GM12878 (cell line): ENCODE measurements at regions of chr2 and their contacts with region 1.

Region 1: GRCh38 chr2:233053928-233054784 is 6.0 kb upstream of the INPP5D start:
- DNase-seq: no peak
- ATAC-seq: peak; percentile 98
- H3K4me3 ChIP-seq: no peak overlapping the region
- H3K27ac ChIP-seq: no peak overlapping the region
- H3K4me1 ChIP-seq: peaks cover 2% of the 10 kb centered on the region
- H3K27me3 ChIP-seq: no peaks in the 10 kb centered on the region
- CTCF ChIP-seq: peak; percentile 87 to 97 (median 93)
- EP300 ChIP-seq: no peak
- POLR2A ChIP-seq: no peak
- RAD21 ChIP-seq: peak; percentile 74

Region 2: DNA sequence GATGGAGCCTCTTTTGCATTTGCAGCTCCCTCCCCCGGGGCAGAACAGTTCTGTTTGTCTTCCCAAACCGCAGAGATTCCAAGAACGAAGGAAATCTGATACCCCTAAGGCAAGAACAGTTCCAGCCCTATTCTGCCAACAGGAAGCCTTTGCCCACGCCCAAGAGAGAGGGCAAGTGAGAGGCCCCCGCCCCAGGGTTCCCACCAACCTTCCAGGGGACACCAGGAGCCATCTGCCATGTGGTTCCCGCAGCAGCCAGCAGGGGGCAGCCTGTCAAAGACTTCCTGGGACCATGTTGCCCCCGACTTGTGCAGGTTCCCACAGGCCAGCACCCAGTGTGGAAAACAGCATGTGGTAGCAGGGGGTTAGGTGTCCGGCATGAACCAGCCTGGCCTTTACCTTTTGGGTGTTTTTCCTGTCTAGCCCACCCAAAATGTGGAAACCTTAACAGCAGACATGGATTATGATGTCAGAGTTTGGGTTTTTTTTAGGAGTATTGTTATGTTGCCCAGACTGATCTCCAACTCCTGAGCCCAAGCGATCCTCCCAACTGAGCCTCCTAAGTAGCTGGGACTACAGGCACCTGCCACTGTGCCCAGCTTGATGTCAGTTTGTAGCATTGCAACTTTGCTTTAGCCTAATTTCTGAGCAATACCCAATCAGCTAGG is 442.5 kb before region 1 on chr2:
- CTCF ChIA-PET with region 1: interaction called, 5 read pairs
- POLR2A ChIA-PET with region 1: no interaction called
- RAD21 ChIA-PET with region 1: no interaction called
- SMC1A ChIA-PET with region 1: interaction called, 3 read pairs
- in situ Hi-C with region 1: no loop called
- intact Hi-C with region 1: loop called (anchors 1 kb)
- DNase-seq: no peak
- ATAC-seq: peak; percentile 90
- H3K4me3 ChIP-seq: no peak overlapping the region
- H3K27ac ChIP-seq: no peak overlapping the region
- H3K4me1 ChIP-seq: no peaks in the 10 kb centered on the region
- H3K27me3 ChIP-seq: no peaks in the 10 kb centered on the region
- CTCF ChIP-seq: peak; percentile 69 to 94 (median 92)
- EP300 ChIP-seq: no peak
- POLR2A ChIP-seq: no peak
- RAD21 ChIP-seq: peak; percentile 49

Region 3: GRCh38 chr2:232854082-232854481 is 200.1 kb before region 1 on chr2:
- CTCF ChIA-PET with region 1: interaction called, 37 read pairs
- POLR2A ChIA-PET with region 1: interaction called, 3 read pairs
- RAD21 ChIA-PET with region 1: interaction called, 4 read pairs
- SMC1A ChIA-PET with region 1: interaction called, 19 read pairs
- in situ Hi-C with region 1: no loop called
- intact Hi-C with region 1: loop called (anchors 1 kb)
- DNase-seq: no peak
- ATAC-seq: no peak
- H3K4me3 ChIP-seq: no peak overlapping the region
- H3K27ac ChIP-seq: no peak overlapping the region
- H3K4me1 ChIP-seq: no peaks in the 10 kb centered on the region
- H3K27me3 ChIP-seq: no peaks in the 10 kb centered on the region
- CTCF ChIP-seq: no peak
- EP300 ChIP-seq: no peak
- POLR2A ChIP-seq: no peak
- RAD21 ChIP-seq: no peak

Region 4: DNA sequence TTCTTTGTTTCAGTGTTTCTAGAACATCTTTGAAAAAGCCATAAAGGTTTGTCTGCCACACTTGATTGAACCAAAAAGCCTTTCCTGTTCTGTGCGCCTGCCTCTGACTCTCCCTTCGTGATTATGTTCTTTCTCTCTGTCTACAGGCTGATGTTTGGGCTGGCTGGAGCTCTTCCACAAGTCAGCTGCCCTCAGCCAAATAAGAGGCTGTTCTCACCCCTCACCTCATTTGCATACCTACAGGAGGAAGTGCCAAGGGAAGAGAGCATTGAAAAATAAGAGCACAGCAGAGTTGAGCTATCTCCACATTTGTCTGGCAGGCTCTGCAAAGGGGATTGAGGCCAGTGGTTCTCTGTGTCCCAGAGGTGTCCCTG is 21.8 kb after region 1 on chr2:
- CTCF ChIA-PET with region 1: interaction called, 68 read pairs
- POLR2A ChIA-PET with region 1: interaction called, 271 read pairs
- RAD21 ChIA-PET with region 1: interaction called, 361 read pairs
- SMC1A ChIA-PET with region 1: interaction called, 351 read pairs
- in situ Hi-C with region 1: no loop called
- intact Hi-C with region 1: no loop called
- DNase-seq: peak; percentile 82
- ATAC-seq: peak; percentile 68
- H3K4me3 ChIP-seq: peak overlapping the region; percentile 30; the same call in 1 of the 2 replicates
- H3K27ac ChIP-seq: peak overlapping the region; percentile 89
- H3K4me1 ChIP-seq: peaks cover 87% of the 10 kb centered on the region
- H3K27me3 ChIP-seq: no peaks in the 10 kb centered on the region
- CTCF ChIP-seq: no peak
- EP300 ChIP-seq: 0 out of 4 replicates have a peak, but pooled peaks of 1 of the 2 experiments have one; percentile 33
- POLR2A ChIP-seq: 0 out of 2 replicates have a peak, but pooled peaks have one; percentile 17
- RAD21 ChIP-seq: no peak

Region 5: GRCh38 chr2:233108611-233109490 is 54.7 kb after region 1 on chr2:
- CTCF ChIA-PET with region 1: interaction called, 10 read pairs
- POLR2A ChIA-PET with region 1: interaction called, 70 read pairs
- RAD21 ChIA-PET with region 1: interaction called, 160 read pairs
- SMC1A ChIA-PET with region 1: interaction called, 5 read pairs
- in situ Hi-C with region 1: no loop called
- intact Hi-C with region 1: no loop called
- DNase-seq: no peak
- ATAC-seq: peak; percentile 81
- H3K4me3 ChIP-seq: 0 out of 2 replicates have a peak overlapping the region, but pooled peaks have one; percentile 30
- H3K27ac ChIP-seq: peak overlapping the region; percentile 43
- H3K4me1 ChIP-seq: peaks cover 34% of the 10 kb centered on the region
- H3K27me3 ChIP-seq: no peaks in the 10 kb centered on the region
- CTCF ChIP-seq: no peak; a peak in 1 of 6 replicates
- EP300 ChIP-seq: no peak
- POLR2A ChIP-seq: peak; percentile 26; the same call in 1 of the 2 replicates
- RAD21 ChIP-seq: no peak

Region 6: GRCh38 chr2:233251306-233252116 is 197.4 kb after region 1 on chr2 and contains the start of gene ATG16L1:
- CTCF ChIA-PET with region 1: interaction called, 36 read pairs
- POLR2A ChIA-PET with region 1: no interaction called
- RAD21 ChIA-PET with region 1: interaction called, 10 read pairs
- SMC1A ChIA-PET with region 1: interaction called, 9 read pairs
- in situ Hi-C with region 1: no loop called
- intact Hi-C with region 1: no loop called
- DNase-seq: peak; percentile 73
- ATAC-seq: peak; percentile 96
- H3K4me3 ChIP-seq: peak within 1 kb of the TSS; percentile 99
- H3K27ac ChIP-seq: peak within 1 kb of the TSS; percentile 95
- H3K4me1 ChIP-seq: peaks cover 4% of the 10 kb centered on the region; the same call in 1 of the 2 replicates
- H3K27me3 ChIP-seq: no peaks in the 10 kb centered on the region
- CTCF ChIP-seq: peak; percentile 93 to 99 (median 98); a peak in 5 of 6 replicates
- EP300 ChIP-seq: no peak
- POLR2A ChIP-seq: peak; percentile 97
- RAD21 ChIP-seq: peak; percentile 98
- polyA plus RNA-seq, gene ATG16L1: 5.2 to 7.8 TPM

Region 7: GRCh38 chr2:233349005-233349998 is 295.1 kb after region 1 on chr2:
- CTCF ChIA-PET with region 1: no interaction called
- POLR2A ChIA-PET with region 1: no interaction called
- RAD21 ChIA-PET with region 1: no interaction called
- SMC1A ChIA-PET with region 1: no interaction called
- in situ Hi-C with region 1: no loop called
- intact Hi-C with region 1: no loop called
- DNase-seq: no peak
- ATAC-seq: peak; percentile 68
- H3K4me3 ChIP-seq: no peak overlapping the region
- H3K27ac ChIP-seq: no peak overlapping the region
- H3K4me1 ChIP-seq: peaks cover 27% of the 10 kb centered on the region
- H3K27me3 ChIP-seq: no peaks in the 10 kb centered on the region
- CTCF ChIP-seq: no peak
- EP300 ChIP-seq: peak in 1 of 2 experiments; percentile 19; a peak in 1 of 4 replicates
- POLR2A ChIP-seq: no peak
- RAD21 ChIP-seq: no peak